ENCODE measurements at regions of chr19 and their contacts with region 1.

Region 1: DNA sequence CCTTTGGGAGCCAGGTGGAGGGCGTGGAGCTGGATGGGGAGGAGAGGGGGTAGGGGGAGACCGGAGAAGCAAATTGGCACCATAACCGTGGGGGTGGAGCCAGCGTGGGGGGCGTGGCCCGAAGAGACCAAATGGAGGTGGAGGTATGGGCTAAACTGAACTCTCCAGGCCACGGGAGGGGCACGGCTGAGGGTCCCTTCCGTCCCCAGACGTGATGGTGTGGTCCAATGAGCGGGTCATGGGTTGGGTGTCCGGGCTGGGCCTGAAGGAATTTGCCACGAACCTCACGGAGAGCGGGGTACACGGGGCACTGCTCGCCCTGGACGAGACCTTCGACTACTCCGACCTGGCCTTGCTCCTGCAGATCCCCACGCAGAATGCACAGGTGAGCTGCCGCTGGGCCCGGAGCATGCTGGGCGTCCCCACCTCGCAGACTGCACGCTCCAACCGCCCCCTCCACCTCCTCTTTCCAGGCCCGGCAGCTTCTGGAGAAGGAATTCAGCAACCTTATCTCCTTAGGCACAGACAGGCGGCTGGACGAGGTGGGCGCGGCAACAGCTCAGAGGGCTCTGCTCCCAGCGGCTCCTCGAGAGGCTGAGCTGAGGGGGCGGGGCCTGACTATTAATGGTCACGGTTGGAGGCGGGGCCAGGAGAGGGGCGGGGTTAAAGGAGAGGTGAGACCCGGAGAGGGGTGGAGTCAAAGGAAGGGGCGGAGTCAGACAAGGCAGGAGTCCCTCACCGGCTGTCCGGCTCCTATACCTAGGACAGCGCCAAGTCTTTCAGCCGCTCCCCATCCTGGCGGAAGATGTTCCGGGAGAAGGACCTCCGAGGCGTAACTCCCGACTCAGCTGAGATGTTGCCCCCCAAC is 6.2 kb downstream of the HRC start:
- DNase-seq: peak; percentile 99
- H3K4me3 ChIP-seq: peak overlapping the region; percentile 76
- H3K27ac ChIP-seq: peak overlapping the region; percentile 96
- H3K4me1 ChIP-seq: peaks cover 31% of the 10 kb centered on the region
- H3K27me3 ChIP-seq: no peaks in the 10 kb centered on the region
- CTCF ChIP-seq: no peak

Region 2: DNA sequence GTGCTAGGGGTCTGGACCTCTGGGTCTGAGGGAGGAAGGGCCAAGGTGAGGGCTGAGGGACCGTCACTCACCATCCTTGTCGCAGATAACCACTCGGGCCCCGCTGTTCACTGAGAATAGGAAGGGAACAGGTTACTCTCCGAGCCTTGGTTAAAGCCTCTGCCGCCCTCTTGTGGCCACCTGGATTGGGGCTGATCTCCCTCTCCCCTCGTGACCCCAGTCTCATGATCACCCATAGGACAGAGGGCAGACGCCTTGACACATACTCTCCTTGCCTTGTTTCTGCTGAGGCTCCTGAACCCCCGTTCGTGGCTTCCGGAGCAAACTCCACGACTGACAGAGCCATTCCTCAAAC is 313.3 kb before region 1 on chr19:
- CTCF ChIA-PET with region 1: no interaction called
- POLR2A ChIA-PET with region 1: no interaction called
- intact Hi-C with region 1: no loop called
- DNase-seq: peak; percentile 88
- H3K4me3 ChIP-seq: peak overlapping the region; percentile 41
- H3K27ac ChIP-seq: no peak overlapping the region
- H3K4me1 ChIP-seq: peaks cover 13% of the 10 kb centered on the region
- H3K27me3 ChIP-seq: no peaks in the 10 kb centered on the region
- CTCF ChIP-seq: peak; percentile 95

Region 3: DNA sequence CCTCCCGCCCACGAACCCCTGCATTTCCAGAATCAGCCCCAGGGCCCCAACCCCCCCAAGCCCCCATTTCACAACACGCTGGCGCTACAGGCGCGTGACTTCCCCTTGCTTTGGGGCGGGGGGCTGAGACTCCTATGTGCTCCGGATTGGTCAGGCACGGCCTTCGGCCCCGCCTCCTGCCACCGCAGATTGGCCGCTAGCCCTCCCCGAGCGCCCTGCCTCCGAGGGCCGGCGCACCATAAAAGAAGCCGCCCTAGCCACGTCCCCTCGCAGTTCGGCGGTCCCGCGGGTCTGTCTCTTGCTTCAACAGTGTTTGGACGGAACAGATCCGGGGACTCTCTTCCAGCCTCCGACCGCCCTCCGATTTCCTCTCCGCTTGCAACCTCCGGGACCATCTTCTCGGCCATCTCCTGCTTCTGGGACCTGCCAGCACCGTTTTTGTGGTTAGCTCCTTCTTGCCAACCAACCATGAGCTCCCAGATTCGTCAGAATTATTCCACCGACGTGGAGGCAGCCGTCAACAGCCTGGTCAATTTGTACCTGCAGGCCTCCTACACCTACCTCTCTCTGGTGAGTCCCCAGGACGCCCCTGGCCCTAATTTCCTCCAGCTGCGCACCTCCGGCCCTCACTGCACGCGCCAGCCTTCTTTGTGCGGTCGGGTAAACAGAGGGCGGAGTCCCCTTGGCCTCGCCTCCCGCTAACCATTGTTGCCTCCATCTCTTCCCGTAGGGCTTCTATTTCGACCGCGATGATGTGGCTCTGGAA is 183.8 kb before region 1 on chr19 and contains the start of gene FTL:
- CTCF ChIA-PET with region 1: no interaction called
- POLR2A ChIA-PET with region 1: no interaction called
- intact Hi-C with region 1: no loop called
- DNase-seq: peak; percentile 97
- H3K4me3 ChIP-seq: peak within 1 kb of the TSS; percentile 77
- H3K27ac ChIP-seq: peak within 1 kb of the TSS; percentile 95
- H3K4me1 ChIP-seq: peaks cover 42% of the 10 kb centered on the region
- H3K27me3 ChIP-seq: no peaks in the 10 kb centered on the region
- CTCF ChIP-seq: no peak
- total RNA-seq, gene FTL: 1,330 and 1,983 TPM in 2 replicates

Region 4: GRCh38 chr19:49127674-49128544 is 21.1 kb before region 1 on chr19:
- CTCF ChIA-PET with region 1: interaction called, 15 read pairs
- POLR2A ChIA-PET with region 1: interaction called, 13 read pairs
- intact Hi-C with region 1: no loop called
- DNase-seq: peak; percentile 98
- H3K4me3 ChIP-seq: peak overlapping the region; percentile 49
- H3K27ac ChIP-seq: no peak overlapping the region
- H3K4me1 ChIP-seq: peaks cover 18% of the 10 kb centered on the region
- H3K27me3 ChIP-seq: no peaks in the 10 kb centered on the region
- CTCF ChIP-seq: no peak

Region 5: DNA sequence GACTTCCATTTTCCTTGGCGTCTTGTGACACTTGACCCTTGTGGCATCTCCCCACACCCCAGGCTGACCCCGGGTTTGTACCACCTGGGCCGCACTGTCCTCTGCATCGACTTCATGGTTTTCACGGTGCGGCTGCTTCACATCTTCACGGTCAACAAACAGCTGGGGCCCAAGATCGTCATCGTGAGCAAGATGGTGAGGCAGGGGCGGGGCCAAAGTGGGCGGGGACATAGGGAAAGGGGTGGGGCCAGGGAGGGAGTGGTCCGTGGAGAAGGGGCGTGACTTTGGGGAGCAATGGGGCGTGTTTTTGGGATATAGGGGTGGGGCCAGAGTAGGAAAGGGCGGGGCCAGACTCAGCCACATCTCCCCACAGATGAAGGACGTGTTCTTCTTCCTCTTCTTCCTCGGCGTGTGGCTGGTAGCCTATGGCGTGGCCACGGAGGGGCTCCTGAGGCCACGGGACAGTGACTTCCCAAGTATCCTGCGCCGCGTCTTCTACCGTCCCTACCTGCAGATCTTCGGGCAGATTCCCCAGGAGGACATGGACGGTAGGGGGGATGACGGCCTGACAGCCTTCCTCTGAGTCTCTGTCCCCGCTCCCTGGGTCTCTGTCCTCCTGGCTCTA is 51.3 kb after region 1 on chr19:
- CTCF ChIA-PET with region 1: interaction called, 9 read pairs
- POLR2A ChIA-PET with region 1: no interaction called
- intact Hi-C with region 1: loop called (anchors 5 kb)
- DNase-seq: peak; percentile 53
- H3K4me3 ChIP-seq: no peak overlapping the region
- H3K27ac ChIP-seq: no peak overlapping the region
- H3K4me1 ChIP-seq: peaks cover 25% of the 10 kb centered on the region
- H3K27me3 ChIP-seq: no peaks in the 10 kb centered on the region
- CTCF ChIP-seq: no peak

Region 6: DNA sequence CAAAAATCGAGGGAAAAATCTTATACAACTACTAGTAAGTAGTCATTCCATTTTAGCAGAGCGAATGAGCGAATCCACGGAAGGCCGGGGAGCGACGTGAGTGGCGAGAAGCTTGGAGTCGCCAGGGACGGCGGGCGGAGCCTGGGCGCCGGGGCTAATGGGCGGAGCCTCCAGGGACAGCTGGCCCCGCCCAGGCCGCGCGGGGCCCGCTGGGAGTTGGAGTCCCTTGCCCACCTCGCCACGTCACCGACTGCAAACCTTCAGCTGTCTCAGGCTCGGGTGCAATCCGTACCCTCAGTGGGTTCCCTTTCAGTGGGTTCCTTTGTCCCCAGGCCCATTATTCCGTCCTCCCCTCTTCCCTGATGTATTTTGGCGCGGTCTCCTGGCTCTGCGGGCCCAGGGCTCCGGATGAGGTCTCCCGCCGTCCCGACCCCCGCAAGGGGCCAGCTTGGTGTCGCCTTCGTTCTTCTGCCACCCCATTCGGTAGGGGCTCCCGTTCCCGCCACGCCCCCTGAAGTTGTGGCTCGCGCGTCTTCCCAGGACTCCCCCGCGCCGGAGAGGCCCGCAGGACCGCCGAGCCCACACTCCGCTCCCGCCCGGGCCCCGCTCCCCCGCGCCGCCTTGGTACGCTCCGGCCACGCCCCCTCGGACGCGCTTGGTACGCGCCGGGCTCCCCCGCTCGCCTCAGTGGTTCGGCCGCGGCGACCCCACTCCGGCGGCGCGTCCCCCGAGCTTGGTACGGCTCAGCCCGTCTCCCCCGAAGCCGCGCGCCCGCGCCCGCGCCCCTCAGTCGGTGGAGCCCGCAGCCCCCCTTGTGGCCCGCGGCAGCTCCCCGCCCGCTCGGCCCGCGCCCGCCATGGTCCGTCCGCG is 701.7 kb after region 1 on chr19 and contains the start of gene PTOV1:
- CTCF ChIA-PET with region 1: no interaction called
- POLR2A ChIA-PET with region 1: interaction called, 17 read pairs
- intact Hi-C with region 1: no loop called
- DNase-seq: peak; percentile 96
- H3K4me3 ChIP-seq: peak within 1 kb of the TSS; percentile 74
- H3K27ac ChIP-seq: peak within 1 kb of the TSS; percentile 99
- H3K4me1 ChIP-seq: peaks cover 19% of the 10 kb centered on the region
- H3K27me3 ChIP-seq: no peaks in the 10 kb centered on the region
- CTCF ChIP-seq: no peak
- total RNA-seq, gene PTOV1: 331 and 356 TPM in 2 replicates

Measured in A673 (cell line).